ENCODE measurements at regions of chr2 and their contacts with region 1.

Region 1: GRCh38 chr2:9139491-9140443 is 66.8 kb upstream of the ASAP2 start:
- DNase-seq: peak; percentile 74 to 87 (median 84)
- H3K4me3 ChIP-seq: no peak overlapping the region
- H3K27ac ChIP-seq: no peak overlapping the region
- H3K4me1 ChIP-seq: peaks cover 0 to 11% (median 9%) of the 10 kb centered on the region in 3 donors
- H3K27me3 ChIP-seq: no peaks in the 10 kb centered on the region
- CTCF ChIP-seq: peak; percentile 86

Region 2: DNA sequence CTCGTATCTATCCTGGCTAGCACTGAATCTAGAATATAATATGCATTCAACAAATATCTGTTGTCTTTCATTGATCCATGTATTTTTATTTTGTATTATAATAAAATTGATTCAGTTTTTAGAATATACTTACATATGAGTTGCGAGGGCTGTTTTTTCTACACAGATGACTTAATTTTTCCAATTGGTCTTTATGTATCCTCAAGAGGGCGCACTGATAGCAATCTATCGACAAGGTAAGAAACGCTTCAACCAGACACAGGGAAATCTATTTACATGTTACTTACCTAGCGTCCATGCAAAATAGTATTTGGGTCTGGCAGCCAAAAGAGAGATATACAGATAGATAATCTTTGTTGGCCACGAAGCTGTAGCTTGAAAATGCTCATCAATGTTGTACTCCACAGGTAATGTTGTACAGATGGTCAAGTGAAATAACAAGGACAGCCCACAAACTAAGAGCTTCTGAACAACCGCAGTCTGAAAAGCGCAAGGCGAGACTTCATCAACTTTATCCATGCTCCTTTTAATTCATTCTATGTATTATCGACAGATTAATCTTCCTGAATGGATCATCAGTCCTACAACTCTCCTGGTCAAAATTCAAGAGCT is 266.8 kb before region 1 on chr2:
- intact Hi-C with region 1: loop called (anchors 10 kb)
- DNase-seq: peak in 1 of 5 donors; percentile 71
- H3K4me3 ChIP-seq: no peak overlapping the region
- H3K27ac ChIP-seq: no peak overlapping the region
- H3K4me1 ChIP-seq: no peaks in the 10 kb centered on the region
- H3K27me3 ChIP-seq: no peaks in the 10 kb centered on the region
- CTCF ChIP-seq: peak; percentile 57

Measured in kidney (tissue), 22 donors.